Mammary epithelial cell (primary cell): ENCODE measurements at regions of chr3 and their contacts with region 1.

Region 1: GRCh38 chr3:2950159-2950558 is 160.0 kb downstream of the IL5RA start:
- DNase-seq: no peak
- H3K4me3 ChIP-seq: no peak overlapping the region
- H3K27ac ChIP-seq: no peak overlapping the region
- H3K4me1 ChIP-seq: no peaks in the 10 kb centered on the region
- H3K27me3 ChIP-seq: no peaks in the 10 kb centered on the region
- CTCF ChIP-seq: no peak

Region 2: GRCh38 chr3:2061360-2061759 is 888.8 kb before region 1 on chr3:
- CTCF ChIA-PET with region 1: no interaction called
- dilution Hi-C with region 1: no loop called
- in situ Hi-C with region 1: no loop called
- intact Hi-C with region 1: no loop called
- DNase-seq: no peak
- H3K4me3 ChIP-seq: no peak overlapping the region
- H3K27ac ChIP-seq: no peak overlapping the region
- H3K4me1 ChIP-seq: no peaks in the 10 kb centered on the region
- H3K27me3 ChIP-seq: no peaks in the 10 kb centered on the region
- CTCF ChIP-seq: no peak

Region 3: GRCh38 chr3:2873986-2874385 is 76.2 kb before region 1 on chr3:
- CTCF ChIA-PET with region 1: no interaction called
- dilution Hi-C with region 1: no loop called
- in situ Hi-C with region 1: no loop called
- intact Hi-C with region 1: no loop called
- DNase-seq: no peak
- H3K4me3 ChIP-seq: no peak overlapping the region
- H3K27ac ChIP-seq: no peak overlapping the region
- H3K4me1 ChIP-seq: no peaks in the 10 kb centered on the region
- H3K27me3 ChIP-seq: no peaks in the 10 kb centered on the region
- CTCF ChIP-seq: no peak

Region 4: DNA sequence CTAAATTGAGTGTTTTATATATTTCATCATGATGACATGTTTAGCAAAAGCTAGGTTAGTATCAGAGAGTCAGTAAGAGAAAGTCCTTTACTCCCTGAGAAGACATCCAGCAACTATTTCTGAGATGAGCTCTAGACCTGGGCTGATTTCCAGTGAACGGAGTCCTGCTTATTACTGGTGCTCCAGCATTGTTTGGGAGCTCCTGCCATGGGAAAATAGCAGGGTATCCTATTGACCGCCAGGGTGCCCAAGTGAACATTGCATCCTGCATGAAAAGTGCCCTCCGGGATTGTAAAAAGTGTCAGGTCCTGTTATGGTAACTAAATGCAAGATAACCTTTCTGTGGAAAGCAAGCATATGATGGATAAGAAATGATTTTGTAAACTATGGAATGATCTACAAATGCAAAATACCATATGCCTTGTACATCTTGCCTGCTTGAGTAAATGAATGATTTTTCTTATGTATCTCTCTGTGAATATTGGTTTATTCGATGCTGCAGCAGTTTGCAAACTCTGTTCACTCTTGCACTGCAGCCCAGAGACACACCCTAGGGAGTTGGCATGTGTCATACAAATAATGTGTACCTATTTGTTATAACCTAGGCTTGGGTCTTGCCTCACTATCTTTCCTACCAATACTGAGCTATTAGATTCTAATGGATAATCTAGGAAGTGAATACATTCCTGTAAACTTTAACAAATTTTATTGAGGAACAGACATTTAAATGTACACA is 63.3 kb after region 1 on chr3:
- CTCF ChIA-PET with region 1: no interaction called
- dilution Hi-C with region 1: loop called (anchors 5 kb)
- in situ Hi-C with region 1: no loop called
- intact Hi-C with region 1: no loop called
- DNase-seq: no peak
- H3K4me3 ChIP-seq: no peak overlapping the region
- H3K27ac ChIP-seq: no peak overlapping the region
- H3K4me1 ChIP-seq: no peaks in the 10 kb centered on the region
- H3K27me3 ChIP-seq: no peaks in the 10 kb centered on the region
- CTCF ChIP-seq: no peak